ENCODE measurements at regions of chr3 and their contacts with region 1.

Region 1: DNA sequence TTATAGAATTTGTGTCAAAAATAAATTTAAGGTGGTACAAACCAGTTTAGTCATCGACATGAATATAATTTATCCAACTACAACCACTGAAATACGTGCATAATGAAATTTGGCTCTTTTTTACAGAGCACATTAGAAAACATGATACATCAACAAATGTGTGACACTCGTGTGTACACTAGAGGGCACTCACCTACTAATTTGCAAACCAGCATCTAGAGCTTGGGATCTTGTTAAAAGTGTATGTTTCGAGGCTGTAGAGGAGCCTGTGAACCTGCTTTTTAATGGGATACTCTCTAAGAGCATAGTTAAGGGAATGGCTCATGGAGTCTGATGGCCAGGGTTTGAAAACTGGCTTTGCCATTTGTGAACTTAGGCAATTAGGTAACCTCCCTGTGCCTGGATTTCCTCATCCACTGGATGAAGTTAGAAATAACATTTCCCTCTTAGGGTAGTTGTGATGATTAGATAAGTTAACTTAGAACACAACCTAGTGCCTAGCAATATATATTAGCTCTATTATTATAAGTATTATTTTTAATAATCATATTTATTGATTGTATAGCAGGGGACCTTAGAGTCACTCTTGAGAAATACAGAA is 8.8 kb upstream of the CPOX start:
- DNase-seq: peak; percentile 17
- H3K4me3 ChIP-seq: no peak overlapping the region
- CTCF ChIP-seq: peak; percentile 67

Region 2: DNA sequence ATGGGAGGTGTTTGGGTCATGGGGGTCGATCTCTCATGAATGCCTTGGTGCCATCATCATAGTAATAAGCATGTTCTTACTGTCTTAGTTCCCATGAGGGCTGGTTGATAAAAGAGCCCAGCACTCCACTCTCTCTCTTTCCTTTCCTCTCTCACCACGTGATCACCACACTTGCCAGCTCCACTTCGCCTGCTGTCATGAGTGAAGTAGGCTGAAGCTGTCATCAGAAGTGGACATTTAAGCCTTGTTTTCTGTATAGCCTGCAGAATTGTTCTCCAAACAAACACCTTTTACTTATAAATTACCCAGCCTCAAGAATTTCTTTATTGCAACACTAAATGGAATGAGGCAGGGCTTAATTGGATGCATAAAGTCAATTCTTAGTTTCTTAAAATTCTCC is 465.5 kb before region 1 on chr3:
- CTCF ChIA-PET with region 1: no interaction called
- POLR2A ChIA-PET with region 1: no interaction called
- DNase-seq: no peak
- H3K4me3 ChIP-seq: no peak overlapping the region
- CTCF ChIP-seq: no peak

Region 3: DNA sequence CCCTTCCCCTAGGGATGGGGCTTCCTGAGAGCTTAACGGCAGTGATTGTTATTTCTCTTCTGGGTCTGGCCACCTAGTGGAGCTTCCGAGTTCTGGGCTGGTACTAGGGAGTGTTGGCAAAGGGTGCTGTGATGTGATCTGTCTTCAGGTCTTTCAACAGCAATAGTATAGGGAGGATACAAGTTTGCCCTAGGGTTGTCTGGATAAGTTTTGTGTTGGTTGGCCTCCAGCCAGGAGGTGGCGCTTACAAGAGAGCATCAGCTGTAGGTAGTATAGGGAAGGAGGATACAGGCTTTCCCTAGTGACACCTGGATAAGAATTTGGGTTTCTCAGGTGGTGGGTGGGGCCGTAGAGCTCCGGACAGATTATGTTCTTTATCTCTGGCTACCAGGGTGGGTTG is 10.4 kb after region 1 on chr3:
- CTCF ChIA-PET with region 1: interaction called, 43 read pairs
- POLR2A ChIA-PET with region 1: no interaction called
- DNase-seq: no peak
- H3K4me3 ChIP-seq: no peak overlapping the region
- CTCF ChIP-seq: no peak

Region 4: GRCh38 chr3:98623572-98624280 is 21.5 kb after region 1 on chr3:
- CTCF ChIA-PET with region 1: interaction called, 22 read pairs
- POLR2A ChIA-PET with region 1: no interaction called
- DNase-seq: no peak
- H3K4me3 ChIP-seq: no peak overlapping the region
- CTCF ChIP-seq: no peak

Region 5: DNA sequence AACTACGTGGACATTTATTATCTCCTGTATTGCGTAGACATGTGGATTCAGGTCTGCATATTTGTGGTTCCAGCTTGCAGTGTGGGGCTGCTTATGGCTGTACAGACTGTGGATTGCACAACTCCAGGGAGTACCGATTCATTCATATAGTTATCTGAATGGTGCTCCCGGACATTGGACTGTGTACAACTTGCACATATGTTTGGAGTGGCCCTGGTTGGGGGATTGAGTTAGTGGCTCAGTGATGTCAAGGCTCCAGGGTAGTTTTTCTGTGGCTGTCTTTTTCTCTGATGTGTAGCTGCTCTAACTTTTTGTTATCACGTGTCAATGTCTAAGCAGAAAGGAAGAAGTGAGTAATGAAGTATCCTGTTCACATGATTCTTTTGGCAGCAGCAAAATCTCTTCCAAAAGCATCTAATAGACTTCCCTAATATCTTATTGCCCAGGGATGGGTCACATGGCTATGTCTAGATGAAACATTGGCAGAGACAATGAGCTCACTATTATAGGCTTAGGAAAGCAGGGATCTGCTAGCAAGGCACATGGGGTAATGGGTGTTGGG is 176.8 kb after region 1 on chr3:
- CTCF ChIA-PET with region 1: interaction called, 33 read pairs
- POLR2A ChIA-PET with region 1: no interaction called
- DNase-seq: peak; percentile 89
- H3K4me3 ChIP-seq: no peak overlapping the region
- CTCF ChIP-seq: no peak

Region 6: DNA sequence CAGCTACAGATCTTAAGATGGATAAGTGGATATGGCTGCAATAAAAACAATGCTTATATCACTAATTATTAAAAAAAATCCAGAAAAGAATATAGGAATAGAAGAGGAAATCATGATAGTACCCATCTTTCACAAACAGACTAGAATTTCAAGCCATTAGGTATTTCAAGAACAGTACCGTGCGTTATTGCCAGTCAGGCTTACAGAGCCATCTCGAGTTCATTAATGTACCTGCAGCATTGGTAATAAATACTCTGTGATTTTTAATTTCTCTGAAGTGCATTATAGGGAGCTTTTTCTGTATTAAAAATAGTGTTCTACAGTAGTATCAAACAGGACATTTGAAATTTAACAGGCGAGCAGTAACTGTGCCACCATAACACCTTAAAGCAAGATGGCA is 196.6 kb after region 1 on chr3:
- CTCF ChIA-PET with region 1: interaction called, 56 read pairs
- POLR2A ChIA-PET with region 1: no interaction called
- DNase-seq: no peak
- H3K4me3 ChIP-seq: no peak overlapping the region
- CTCF ChIP-seq: no peak

Region 7: DNA sequence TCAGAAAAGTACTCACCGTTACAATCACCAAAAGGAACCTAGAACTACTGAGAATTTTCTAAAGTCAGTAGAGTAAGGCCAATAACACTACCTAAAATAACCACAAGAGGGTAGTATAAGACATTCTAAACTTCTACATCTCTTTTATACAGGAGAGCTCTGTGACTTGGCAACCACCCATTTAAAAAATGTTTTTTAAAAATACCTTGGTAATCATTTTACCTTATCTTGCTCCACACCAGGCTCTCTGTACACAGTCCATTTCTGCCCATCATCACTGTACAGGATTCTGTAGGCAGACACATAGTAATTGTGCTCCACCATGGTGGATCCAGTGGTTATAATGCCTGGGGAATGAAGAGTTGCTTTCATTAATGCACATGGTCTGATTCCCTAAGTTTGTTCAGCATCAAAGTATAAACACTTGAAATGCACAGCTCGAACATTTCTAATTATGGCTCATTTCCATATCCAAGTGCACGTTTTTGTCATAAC is 215.4 kb after region 1 on chr3:
- CTCF ChIA-PET with region 1: interaction called, 267 read pairs
- POLR2A ChIA-PET with region 1: no interaction called
- DNase-seq: no peak
- H3K4me3 ChIP-seq: no peak overlapping the region
- CTCF ChIP-seq: peak; percentile 10

Region 8: DNA sequence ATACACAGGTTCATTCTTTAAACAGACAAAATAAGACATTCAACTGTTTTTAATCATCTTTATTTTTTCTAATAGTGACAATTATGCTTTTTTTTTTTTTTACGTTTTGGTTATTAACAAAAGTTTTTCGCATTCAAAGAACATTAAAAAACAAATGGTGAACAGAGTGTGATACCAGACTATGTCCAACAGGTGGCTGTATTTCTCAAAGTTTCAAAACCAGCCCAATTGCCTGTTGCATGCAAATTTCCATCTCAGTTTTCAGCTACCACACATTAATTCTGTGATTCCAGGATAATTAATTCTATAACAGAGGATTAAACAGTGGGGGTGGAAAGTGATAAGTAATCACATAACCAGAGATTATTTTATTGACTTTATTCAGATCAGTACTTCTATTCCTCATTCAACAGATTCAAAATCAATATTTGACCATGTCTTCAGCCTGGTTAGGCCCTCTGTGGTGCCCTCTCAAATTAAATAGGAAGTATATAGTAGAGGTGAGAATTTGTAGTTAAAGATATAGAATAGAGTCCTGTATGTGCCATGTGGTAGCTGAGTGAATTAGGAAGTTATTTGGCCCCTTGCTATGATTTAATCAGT is 421.5 kb after region 1 on chr3:
- CTCF ChIA-PET with region 1: interaction called, 13 read pairs
- POLR2A ChIA-PET with region 1: no interaction called
- DNase-seq: no peak
- H3K4me3 ChIP-seq: no peak overlapping the region
- CTCF ChIP-seq: peak; percentile 52